Posterior vena cava (tissue), 2 donors: ENCODE measurements at regions of chr10 and their contacts with region 1.

Region 1: GRCh38 chr10:77641788-77642397 is 4.3 kb upstream of the KCNMA1 start:
- DNase-seq: no peak

Region 2: GRCh38 chr10:77165445-77166208 is 476.3 kb before region 1 on chr10:
- intact Hi-C with region 1: loop called in 1 of 2 experiments (anchors 2 kb)
- DNase-seq: no peak

Region 3: GRCh38 chr10:77179015-77179695 is 462.7 kb before region 1 on chr10:
- intact Hi-C with region 1: loop called (anchors 2 to 5 kb)
- DNase-seq: no peak

Region 4: GRCh38 chr10:77428691-77429395 is 213.1 kb before region 1 on chr10:
- intact Hi-C with region 1: loop called in 1 of 2 experiments (anchors 10 kb)
- DNase-seq: peak; percentile 90

Region 5: GRCh38 chr10:77574438-77574837 is 67.5 kb before region 1 on chr10:
- intact Hi-C with region 1: no loop called
- DNase-seq: no peak

Region 6: GRCh38 chr10:77613476-77614130 is 28.3 kb before region 1 on chr10:
- intact Hi-C with region 1: loop called in 1 of 2 experiments (anchors 1 kb)
- DNase-seq: no peak

Region 7: DNA sequence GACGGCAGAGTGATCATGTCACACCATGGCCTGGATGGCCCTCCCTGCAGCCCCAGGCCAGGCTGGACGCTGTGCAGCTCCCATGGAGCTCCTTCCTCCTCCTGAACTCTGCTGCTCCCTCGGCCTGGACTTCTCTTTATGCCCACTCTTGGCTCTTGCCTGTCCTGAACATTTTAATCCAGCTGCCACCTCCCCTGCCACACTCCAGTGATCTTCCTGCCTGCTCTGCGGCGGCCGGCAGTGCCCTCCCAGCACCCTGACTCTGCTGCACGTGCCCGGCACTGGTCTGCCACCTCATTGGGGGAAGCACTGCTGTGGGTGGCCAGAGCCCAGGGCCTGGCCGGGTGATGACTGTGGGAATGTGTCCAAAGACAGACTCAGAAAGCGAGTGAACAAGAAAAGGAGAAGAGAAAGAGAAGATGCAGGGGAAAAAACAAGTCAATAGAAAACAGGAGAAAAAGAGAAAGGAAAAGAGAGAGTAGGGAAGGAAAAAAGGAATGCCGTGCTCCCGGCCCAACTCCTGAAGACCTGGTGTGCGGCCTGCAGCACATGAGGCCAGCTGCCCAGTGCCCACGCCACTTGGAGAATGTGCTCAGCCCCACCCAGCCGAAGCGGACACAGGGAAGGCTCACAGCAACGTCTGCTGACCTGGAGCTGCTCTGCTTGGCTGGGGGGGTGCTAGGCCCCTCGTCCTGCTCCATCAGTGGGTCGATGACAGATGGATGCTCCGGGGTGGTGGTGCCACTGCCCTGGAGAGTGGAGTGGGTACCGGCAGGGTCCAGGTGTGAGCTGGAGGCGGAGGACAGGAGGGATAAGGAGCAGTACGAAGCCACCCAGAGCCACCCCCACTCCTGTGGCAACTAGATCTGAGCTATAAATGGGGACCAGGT is 168.8 kb after region 1 on chr10:
- intact Hi-C with region 1: no loop called
- DNase-seq: peak; percentile 76